Panc1 (cell line): ENCODE measurements at regions of chr15 and their contacts with region 1.

Region 1: GRCh38 chr15:28998511-28998910 is 112.7 kb downstream of the APBA2 start:
- DNase-seq: no peak
- ATAC-seq: peak; percentile 76; the same call in 1 of the 2 replicates
- H3K4me3 ChIP-seq: no peak overlapping the region
- H3K27ac ChIP-seq: no peak overlapping the region
- H3K4me1 ChIP-seq: no peaks in the 10 kb centered on the region
- H3K27me3 ChIP-seq: no peaks in the 10 kb centered on the region; the same call in 1 of the 2 replicates
- CTCF ChIP-seq: no peak; the same call in 1 of the 2 replicates

Region 2: GRCh38 chr15:27124287-27124871 is 1874.1 kb before region 1 on chr15:
- CTCF ChIA-PET with region 1: no interaction called
- POLR2A ChIA-PET with region 1: no interaction called
- in situ Hi-C with region 1: no loop called
- intact Hi-C with region 1: no loop called
- DNase-seq: no peak
- ATAC-seq: no peak
- H3K4me3 ChIP-seq: no peak overlapping the region
- H3K27ac ChIP-seq: no peak overlapping the region
- H3K4me1 ChIP-seq: no peaks in the 10 kb centered on the region
- H3K27me3 ChIP-seq: no peaks in the 10 kb centered on the region
- CTCF ChIP-seq: no peak

Region 3: DNA sequence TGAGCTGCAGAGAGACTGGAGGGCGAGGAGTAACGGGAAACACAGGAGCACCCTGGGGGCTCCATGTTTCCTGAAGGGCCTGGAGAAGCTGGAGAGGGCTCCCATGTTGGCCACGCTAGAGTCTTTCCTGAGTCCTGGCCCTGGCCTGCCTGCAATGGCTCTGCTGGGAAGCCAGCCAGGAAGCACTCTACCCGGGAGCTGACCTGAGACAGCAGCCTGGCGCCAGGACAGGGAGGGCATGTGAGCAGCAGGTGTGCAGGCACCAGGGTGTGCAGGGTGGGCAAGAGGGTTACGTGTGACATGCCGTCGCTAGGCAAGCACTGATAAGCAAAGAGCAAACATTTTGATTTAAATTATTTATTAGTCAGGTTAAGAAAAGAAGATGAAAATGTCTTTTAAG is 1200.7 kb before region 1 on chr15:
- CTCF ChIA-PET with region 1: no interaction called
- POLR2A ChIA-PET with region 1: no interaction called
- in situ Hi-C with region 1: no loop called
- intact Hi-C with region 1: no loop called
- DNase-seq: no peak
- ATAC-seq: no peak
- H3K4me3 ChIP-seq: no peak overlapping the region
- H3K27ac ChIP-seq: no peak overlapping the region
- H3K4me1 ChIP-seq: no peaks in the 10 kb centered on the region
- H3K27me3 ChIP-seq: no peaks in the 10 kb centered on the region
- CTCF ChIP-seq: no peak

Region 4: GRCh38 chr15:29024662-29025061 is 26.2 kb after region 1 on chr15:
- CTCF ChIA-PET with region 1: no interaction called
- POLR2A ChIA-PET with region 1: no interaction called
- in situ Hi-C with region 1: no loop called
- intact Hi-C with region 1: no loop called
- DNase-seq: no peak
- ATAC-seq: no peak
- H3K4me3 ChIP-seq: no peak overlapping the region
- H3K27ac ChIP-seq: no peak overlapping the region
- H3K4me1 ChIP-seq: no peaks in the 10 kb centered on the region
- H3K27me3 ChIP-seq: peaks cover 5% of the 10 kb centered on the region; the same call in 1 of the 2 replicates
- CTCF ChIP-seq: no peak

Region 5: GRCh38 chr15:29143909-29144308 is 145.4 kb after region 1 on chr15:
- CTCF ChIA-PET with region 1: no interaction called
- POLR2A ChIA-PET with region 1: no interaction called
- in situ Hi-C with region 1: no loop called
- intact Hi-C with region 1: no loop called
- DNase-seq: no peak
- ATAC-seq: no peak
- H3K4me3 ChIP-seq: no peak overlapping the region
- H3K27ac ChIP-seq: no peak overlapping the region
- H3K4me1 ChIP-seq: peaks cover 4% of the 10 kb centered on the region; the same call in 1 of the 2 replicates
- H3K27me3 ChIP-seq: no peaks in the 10 kb centered on the region; the same call in 1 of the 2 replicates
- CTCF ChIP-seq: no peak

Region 6: GRCh38 chr15:29645841-29646240 is 647.3 kb after region 1 on chr15:
- CTCF ChIA-PET with region 1: no interaction called
- POLR2A ChIA-PET with region 1: interaction called, 10 read pairs
- in situ Hi-C with region 1: no loop called
- intact Hi-C with region 1: no loop called
- DNase-seq: no peak
- ATAC-seq: no peak
- H3K4me3 ChIP-seq: no peak overlapping the region
- H3K27ac ChIP-seq: no peak overlapping the region
- H3K4me1 ChIP-seq: no peaks in the 10 kb centered on the region
- H3K27me3 ChIP-seq: no peaks in the 10 kb centered on the region
- CTCF ChIP-seq: no peak